ENCODE measurements at regions of chrX and their contacts with region 1.

Region 1: GRCh38 chrX:73943693-73944562 is 360.1 kb upstream of the ZCCHC13 start:
- DNase-seq: peak; percentile 70
- ATAC-seq: peak; percentile 100
- H3K4me3 ChIP-seq: peak overlapping the region; percentile 80 to 89 (median 85)
- H3K27ac ChIP-seq: peak overlapping the region; percentile 96
- H3K4me1 ChIP-seq: peaks cover 12% of the 10 kb centered on the region; the same call in 1 of the 2 replicates
- H3K27me3 ChIP-seq: no peaks in the 10 kb centered on the region; a peak in 1 of 5 replicates
- CTCF ChIP-seq: peak; percentile 24; the same call in 1 of the 2 replicates
- EP300 ChIP-seq: peak in 1 of 2 experiments; percentile 16; a peak in 1 of 4 replicates
- POLR2A ChIP-seq: peak; percentile 59 to 89; a peak in 3 of 4 replicates
- RAD21 ChIP-seq: peak; percentile 43; the same call in 1 of the 2 replicates

Region 2: GRCh38 chrX:73987166-73987565 is 43.2 kb after region 1 on chrX:
- CTCF ChIA-PET with region 1: no interaction called
- POLR2A ChIA-PET with region 1: no interaction called
- in situ Hi-C with region 1: no loop called
- intact Hi-C with region 1: loop called (anchors 2 kb)
- DNase-seq: no peak
- ATAC-seq: no peak
- H3K4me3 ChIP-seq: no peak overlapping the region
- H3K27ac ChIP-seq: no peak overlapping the region
- H3K4me1 ChIP-seq: no peaks in the 10 kb centered on the region
- H3K27me3 ChIP-seq: no peaks in the 10 kb centered on the region
- CTCF ChIP-seq: no peak
- EP300 ChIP-seq: no peak
- POLR2A ChIP-seq: no peak
- RAD21 ChIP-seq: no peak

Region 3: DNA sequence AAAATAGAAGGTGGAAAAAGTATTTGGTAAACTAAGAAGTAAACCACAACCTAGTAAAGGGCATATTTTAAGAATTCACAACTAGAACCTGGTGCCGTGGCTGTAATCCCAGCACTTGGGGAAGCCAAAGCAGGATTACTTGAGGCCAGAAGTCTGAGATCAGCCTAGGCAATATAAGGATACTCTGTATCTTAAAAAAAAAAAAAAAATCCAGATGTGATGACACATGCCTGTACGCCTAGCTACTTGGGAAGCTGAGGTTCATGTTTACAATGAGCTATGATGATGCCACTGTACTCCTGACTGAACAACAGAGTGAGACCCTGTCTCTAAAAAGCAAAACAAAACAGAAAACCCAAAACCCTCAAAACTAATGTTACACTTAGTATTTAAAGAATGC is 65.1 kb after region 1 on chrX:
- CTCF ChIA-PET with region 1: no interaction called
- POLR2A ChIA-PET with region 1: no interaction called
- in situ Hi-C with region 1: no loop called
- intact Hi-C with region 1: no loop called
- DNase-seq: no peak
- ATAC-seq: no peak
- H3K4me3 ChIP-seq: no peak overlapping the region
- H3K27ac ChIP-seq: no peak overlapping the region
- H3K4me1 ChIP-seq: no peaks in the 10 kb centered on the region
- H3K27me3 ChIP-seq: no peaks in the 10 kb centered on the region
- CTCF ChIP-seq: no peak
- EP300 ChIP-seq: no peak
- POLR2A ChIP-seq: no peak
- RAD21 ChIP-seq: no peak

Measured in HepG2 (cell line).